ENCODE measurements at regions of chr5 and their contacts with region 1.

Region 1: GRCh38 chr5:170225326-170226128 is 7.3 kb upstream of the C5orf58 start:
- DNase-seq: peak; percentile 83
- H3K4me3 Mint-ChIP-seq: no peak overlapping the region
- H3K27ac Mint-ChIP-seq: no peak overlapping the region
- H3K4me1 Mint-ChIP-seq: no peaks in the 10 kb centered on the region
- H3K27me3 Mint-ChIP-seq: no peaks in the 10 kb centered on the region
- CTCF ChIP-seq: peak; percentile 90

Region 2: DNA sequence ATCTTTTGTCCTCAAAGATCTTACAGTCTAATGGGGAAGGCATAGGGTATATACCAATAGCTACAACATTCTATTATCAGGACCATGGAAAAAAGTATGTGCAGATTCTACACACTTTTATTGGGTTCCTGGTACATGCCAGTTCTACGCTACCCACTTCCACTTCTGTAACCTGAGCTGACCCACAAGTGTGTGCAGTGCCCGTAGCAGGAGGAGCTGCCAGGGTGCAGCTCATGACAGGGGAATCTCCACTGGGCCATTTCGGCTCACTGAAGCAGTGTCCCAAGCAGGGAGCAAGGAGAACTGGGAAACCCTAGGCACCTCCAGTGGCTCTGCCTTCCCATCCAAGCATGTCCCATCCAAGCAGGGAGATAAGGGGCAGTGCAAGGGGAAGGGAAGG is 59.4 kb before region 1 on chr5:
- CTCF ChIA-PET with region 1: no interaction called
- POLR2A ChIA-PET with region 1: no interaction called
- intact Hi-C with region 1: no loop called
- DNase-seq: no peak
- H3K4me3 Mint-ChIP-seq: no peak overlapping the region
- H3K27ac Mint-ChIP-seq: no peak overlapping the region
- H3K4me1 Mint-ChIP-seq: no peaks in the 10 kb centered on the region
- H3K27me3 Mint-ChIP-seq: no peaks in the 10 kb centered on the region
- CTCF ChIP-seq: no peak

Region 3: DNA sequence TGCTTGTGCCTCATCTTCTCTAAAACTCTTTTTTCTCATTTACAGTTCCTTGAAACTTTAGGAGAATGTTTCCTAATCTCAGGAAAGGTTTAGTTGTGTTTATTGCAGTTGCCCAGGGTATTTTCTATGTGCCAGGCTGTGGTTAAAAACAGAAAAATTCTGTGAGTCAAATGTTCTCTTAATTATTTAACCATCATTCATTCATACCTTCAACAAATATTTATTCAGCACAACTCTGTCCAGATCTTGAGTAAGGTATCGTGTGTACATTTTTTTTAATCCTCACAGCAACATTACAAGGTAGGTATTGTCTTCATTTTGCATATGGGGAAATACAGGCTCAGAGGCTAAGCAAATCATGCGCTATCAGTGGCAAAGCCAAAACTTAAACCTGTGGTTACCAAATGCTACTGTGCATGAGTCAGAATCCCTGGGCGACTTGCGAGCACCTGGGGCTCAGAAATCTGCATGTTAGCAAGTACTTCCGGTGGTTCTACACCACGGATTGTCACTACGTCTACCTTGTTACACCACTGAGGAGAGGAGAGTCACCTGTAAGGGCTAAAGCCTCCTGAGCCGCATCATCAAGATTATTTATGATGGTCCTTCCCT is 28.4 kb after region 1 on chr5:
- CTCF ChIA-PET with region 1: interaction called, 14 read pairs
- POLR2A ChIA-PET with region 1: interaction called, 4 read pairs
- intact Hi-C with region 1: no loop called
- DNase-seq: peak; percentile 89
- H3K4me3 Mint-ChIP-seq: no peak overlapping the region
- H3K27ac Mint-ChIP-seq: no peak overlapping the region
- H3K4me1 Mint-ChIP-seq: no peaks in the 10 kb centered on the region
- H3K27me3 Mint-ChIP-seq: no peaks in the 10 kb centered on the region
- CTCF ChIP-seq: no peak

Region 4: DNA sequence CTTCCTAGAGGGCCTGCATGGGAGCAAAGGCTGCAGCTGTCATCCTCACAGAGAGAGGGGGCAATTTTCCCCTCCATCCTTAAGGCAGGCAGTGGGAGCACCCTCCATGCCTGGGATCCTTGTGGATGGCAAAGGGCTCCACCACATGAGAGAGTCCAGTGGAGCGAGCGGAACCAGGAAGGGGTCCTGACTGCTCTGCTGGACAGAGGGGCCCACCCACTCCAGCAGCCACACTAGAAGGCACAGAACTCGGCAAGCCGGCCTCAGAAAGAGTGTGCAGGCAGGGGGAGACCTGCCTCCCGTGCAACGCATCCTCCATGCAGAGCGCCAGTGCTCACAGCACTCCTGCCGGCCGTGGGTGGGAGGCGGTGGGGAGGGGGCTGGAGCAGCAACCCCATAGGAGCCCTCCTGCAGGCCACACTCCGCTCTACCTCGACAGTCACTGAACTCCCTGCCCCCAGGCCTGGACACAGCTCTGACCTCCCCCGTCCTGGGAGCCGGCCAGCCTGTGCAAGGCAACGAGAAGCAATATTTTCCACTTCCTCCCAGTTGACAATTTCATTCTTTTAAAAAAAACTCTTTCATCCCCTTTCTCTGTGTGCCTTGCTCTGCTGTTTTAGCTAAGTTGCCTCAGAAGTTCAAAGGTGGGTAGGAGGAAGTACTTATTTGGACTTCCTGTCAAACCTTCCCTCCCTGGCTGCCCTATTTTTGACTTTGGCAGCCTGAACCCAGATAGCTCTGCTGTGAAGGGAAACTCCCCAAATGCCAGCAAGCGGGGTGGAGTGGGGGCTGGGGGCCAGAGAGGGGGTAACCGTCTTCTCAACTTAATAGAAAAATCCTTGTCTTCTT is 77.3 kb after region 1 on chr5:
- CTCF ChIA-PET with region 1: interaction called, 11 read pairs
- POLR2A ChIA-PET with region 1: no interaction called
- intact Hi-C with region 1: no loop called
- DNase-seq: no peak
- H3K4me3 Mint-ChIP-seq: no peak overlapping the region
- H3K27ac Mint-ChIP-seq: no peak overlapping the region
- H3K4me1 Mint-ChIP-seq: peaks cover 15% of the 10 kb centered on the region
- H3K27me3 Mint-ChIP-seq: no peaks in the 10 kb centered on the region
- CTCF ChIP-seq: no peak

Region 5: GRCh38 chr5:170380361-170380951 is 154.9 kb after region 1 on chr5:
- CTCF ChIA-PET with region 1: interaction called, 24 read pairs
- POLR2A ChIA-PET with region 1: no interaction called
- intact Hi-C with region 1: no loop called
- DNase-seq: peak; percentile 25
- H3K4me3 Mint-ChIP-seq: no peak overlapping the region
- H3K27ac Mint-ChIP-seq: no peak overlapping the region
- H3K4me1 Mint-ChIP-seq: peaks cover 4% of the 10 kb centered on the region
- H3K27me3 Mint-ChIP-seq: peaks cover under 1% of the 10 kb centered on the region
- CTCF ChIP-seq: no peak

Region 6: DNA sequence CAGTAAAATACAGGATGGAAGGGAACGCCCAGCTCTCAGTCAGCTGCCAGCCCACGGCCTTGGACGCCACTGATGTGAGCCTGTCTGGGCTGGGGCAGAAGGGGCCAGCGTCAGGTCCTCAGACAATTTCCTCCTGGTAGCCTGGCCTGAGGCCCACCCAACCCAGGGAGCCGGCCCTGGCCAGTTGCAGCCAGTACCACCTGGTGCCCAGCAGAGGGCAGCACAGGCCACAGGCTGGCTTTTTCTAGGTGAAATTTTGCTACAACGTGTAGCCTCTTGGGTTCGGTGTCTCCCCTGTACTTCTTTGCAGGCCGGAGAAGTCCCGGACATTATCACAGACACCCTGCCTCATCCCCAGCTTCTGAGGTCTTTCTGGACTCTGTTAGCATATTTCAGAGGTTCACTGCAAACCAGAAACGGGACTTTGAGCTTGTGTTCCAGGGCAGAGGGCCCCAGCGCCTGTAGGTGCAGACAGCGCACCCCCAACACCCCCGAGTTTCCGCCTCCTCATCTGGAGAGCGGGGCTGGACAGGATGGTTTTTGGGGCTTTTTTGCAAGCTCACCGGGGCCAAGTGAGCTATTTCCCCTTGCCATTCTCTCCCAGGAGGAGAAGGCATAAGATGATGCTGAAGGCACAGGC is 209.6 kb after region 1 on chr5:
- CTCF ChIA-PET with region 1: interaction called, 39 read pairs
- POLR2A ChIA-PET with region 1: no interaction called
- intact Hi-C with region 1: no loop called
- DNase-seq: peak; percentile 74
- H3K4me3 Mint-ChIP-seq: no peak overlapping the region
- H3K27ac Mint-ChIP-seq: no peak overlapping the region
- H3K4me1 Mint-ChIP-seq: no peaks in the 10 kb centered on the region
- H3K27me3 Mint-ChIP-seq: peaks cover 23% of the 10 kb centered on the region
- CTCF ChIP-seq: peak; percentile 99

Region 7: DNA sequence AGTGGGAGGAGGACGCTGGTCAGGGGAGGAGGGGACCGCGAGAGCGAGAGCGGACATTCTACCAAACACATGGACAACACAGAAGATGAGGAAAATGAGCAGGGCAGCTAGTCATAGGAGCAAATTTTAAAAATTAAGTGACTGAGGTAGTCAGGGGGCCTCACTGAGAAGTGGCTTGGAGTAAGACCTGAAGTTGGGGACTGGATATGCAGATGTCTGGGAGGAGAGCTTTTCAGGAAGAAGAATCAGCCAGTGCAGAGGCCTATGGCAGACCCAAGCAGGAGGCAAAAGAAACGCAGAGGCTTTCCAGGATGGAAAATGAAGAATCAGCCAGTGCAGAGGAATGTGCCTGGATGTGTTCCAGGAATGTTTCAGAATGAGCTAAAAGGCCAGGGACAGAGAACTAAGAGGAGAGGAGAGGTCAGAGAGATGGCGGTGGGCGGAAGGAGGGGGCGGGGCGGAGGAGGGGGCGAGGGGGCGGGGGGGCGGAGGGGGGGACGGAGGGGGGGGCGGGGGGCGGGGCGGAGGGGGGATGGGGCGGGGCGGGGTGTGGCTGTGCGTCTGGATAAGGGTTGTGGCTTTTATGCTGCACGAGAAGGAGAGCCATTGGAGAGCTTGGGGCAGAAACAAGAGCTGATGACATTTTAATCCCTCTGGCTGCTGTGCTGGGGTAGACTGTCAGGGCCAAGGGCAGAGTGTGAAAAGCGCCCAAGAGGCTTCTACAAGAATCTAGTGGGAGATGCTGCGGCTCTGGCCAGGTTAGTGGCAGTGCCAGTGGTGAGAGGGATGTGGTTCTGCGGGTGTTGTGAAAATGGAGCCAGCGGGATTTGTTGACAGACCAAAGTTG is 407.9 kb after region 1 on chr5:
- CTCF ChIA-PET with region 1: interaction called, 49 read pairs
- POLR2A ChIA-PET with region 1: no interaction called
- intact Hi-C with region 1: no loop called
- DNase-seq: peak; percentile 82
- H3K4me3 Mint-ChIP-seq: peak overlapping the region; percentile 65
- H3K27ac Mint-ChIP-seq: peak overlapping the region; percentile 17
- H3K4me1 Mint-ChIP-seq: peaks cover 20% of the 10 kb centered on the region
- H3K27me3 Mint-ChIP-seq: peaks cover 15% of the 10 kb centered on the region
- CTCF ChIP-seq: no peak

Region 8: DNA sequence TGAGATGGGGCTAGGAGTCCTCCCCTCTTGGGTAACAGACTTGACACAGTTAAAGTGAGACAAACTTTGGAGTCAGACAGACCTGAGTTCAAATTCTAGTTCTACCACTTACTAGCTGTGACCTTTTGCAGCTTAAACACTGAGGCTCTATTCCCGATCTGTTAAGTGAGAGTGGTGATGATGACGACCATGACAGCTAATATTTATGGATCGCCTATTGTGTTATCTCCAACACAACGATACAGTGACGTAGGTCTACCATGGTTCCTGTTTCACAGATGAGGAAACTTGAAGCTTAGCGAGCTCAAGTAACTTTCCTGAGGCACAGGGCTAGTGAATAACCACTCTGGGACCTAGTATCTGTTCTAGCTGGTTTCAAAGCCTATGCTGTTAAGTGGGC is 447.7 kb after region 1 on chr5:
- CTCF ChIA-PET with region 1: no interaction called
- POLR2A ChIA-PET with region 1: no interaction called
- intact Hi-C with region 1: no loop called
- DNase-seq: no peak
- H3K4me3 Mint-ChIP-seq: no peak overlapping the region
- H3K27ac Mint-ChIP-seq: no peak overlapping the region
- H3K4me1 Mint-ChIP-seq: no peaks in the 10 kb centered on the region
- H3K27me3 Mint-ChIP-seq: peaks cover 39% of the 10 kb centered on the region
- CTCF ChIP-seq: no peak

Measured in MCF 10A (cell line).